Head of caudate nucleus (tissue), 42 donors: ENCODE measurements at regions of chr2 and their contacts with region 1.

Region 1: GRCh38 chr2:86623651-86624541 is at the start of gene RNF103:
- DNase-seq: peak; percentile 94 to 100 (median 99)

Region 2: DNA sequence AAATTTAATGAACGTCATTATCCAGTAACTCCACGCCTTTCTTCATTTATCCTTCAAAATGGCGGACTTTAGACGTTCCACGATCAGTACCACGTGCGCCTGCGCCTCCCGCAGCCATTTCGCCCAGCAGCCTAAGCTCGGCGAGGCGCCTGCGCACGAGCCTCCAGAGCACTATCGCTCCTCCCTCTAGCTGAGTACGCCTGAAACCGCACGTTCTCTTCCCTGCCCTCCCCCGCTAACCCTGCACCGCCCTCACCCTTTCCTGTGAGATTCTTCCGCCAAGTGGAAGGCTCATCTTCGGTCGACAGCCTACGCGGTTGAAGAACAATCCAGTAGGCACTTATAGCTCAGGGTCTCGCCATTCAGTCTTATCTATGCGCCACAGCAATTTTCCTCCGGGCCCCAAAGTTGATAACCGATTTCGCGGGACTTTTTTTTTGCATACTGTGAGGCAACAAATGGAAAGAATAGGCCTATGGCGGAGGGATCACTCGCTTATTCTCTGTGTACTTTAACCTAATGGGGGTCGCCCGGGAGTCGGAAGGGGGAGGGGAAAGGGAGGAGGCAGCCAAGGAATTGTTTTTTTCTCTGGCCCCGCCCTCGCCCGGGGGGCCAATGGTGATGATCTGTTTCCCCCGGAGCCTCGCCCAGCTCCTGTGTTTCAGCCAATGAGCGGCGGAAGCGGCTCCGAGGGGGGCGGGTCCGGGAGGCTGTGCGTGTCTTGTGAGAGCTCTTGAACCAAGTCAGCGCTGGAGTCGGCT is 183.1 kb before region 1 on chr2 and contains the start of gene KDM3A:
- intact Hi-C with region 1: loop called (anchors 2 kb)
- DNase-seq: peak; percentile 96 to 100 (median 99)

Region 3: DNA sequence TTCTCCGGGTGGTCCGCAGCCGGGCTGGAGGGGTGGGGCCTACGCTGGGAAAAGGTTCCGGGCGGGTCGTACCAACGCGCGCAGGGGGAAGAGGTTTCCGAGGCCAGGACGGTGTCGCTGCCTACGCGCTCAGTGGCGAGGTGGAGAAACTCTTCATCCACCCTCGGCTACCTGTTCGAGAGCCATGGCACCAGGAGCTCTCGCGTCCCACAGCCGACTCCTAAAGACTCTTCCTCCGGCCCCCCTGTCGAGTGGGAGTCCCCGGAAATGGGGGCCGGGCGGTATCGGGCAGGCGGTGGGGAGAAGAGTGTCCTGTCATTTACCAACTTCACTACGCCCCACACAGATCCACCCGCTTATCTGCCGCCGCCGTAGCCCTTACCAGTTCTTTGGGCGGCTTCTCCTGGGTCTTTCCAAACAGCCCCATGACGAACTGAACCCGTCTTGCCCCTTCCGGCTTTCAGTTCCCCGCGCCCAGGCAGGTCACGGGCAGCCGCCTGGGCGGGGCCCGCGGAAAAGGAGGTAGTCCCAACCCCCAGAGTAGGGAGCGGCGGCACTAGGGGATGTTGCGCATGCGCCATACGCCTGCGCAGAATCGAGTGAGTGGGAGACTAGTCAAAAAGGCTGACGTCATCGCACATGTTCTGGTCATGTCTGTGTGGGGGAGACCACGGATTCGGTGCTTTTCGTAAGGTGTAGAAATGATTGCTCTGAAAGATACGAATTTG is 60.8 kb before region 1 on chr2 and contains the start of gene CHMP3:
- intact Hi-C with region 1: loop called (anchors 5 kb)
- DNase-seq: peak; percentile 90 to 98 (median 95)